Activated T-helper 1 cell treated with anti-CD3 and anti-CD28 coated beads, Interleukin-12 subunit alpha, Interleukin-12 subunit beta, Interleukin-2, Interleukin-4 antibody, amounts not matched to agents 30 ng/mL and 10 ng/mL and 1 ng/mL, durations not matched to agents 14 hours and 24 hours and 36 hours (primary cell): ENCODE measurements at regions of chr1 and their contacts with region 1.

Region 1: GRCh38 chr1:182877842-182878241 is 38.7 kb downstream of the DHX9 start:
- DNase-seq: no peak
- H3K4me3 Mint-ChIP-seq: no peak overlapping the region
- H3K27ac Mint-ChIP-seq: peak overlapping the region; percentile 66
- H3K4me1 Mint-ChIP-seq: peaks cover 34% of the 10 kb centered on the region
- H3K27me3 Mint-ChIP-seq: no peaks in the 10 kb centered on the region

Region 2: GRCh38 chr1:182861994-182862393 is 15.8 kb before region 1 on chr1:
- intact Hi-C with region 1: loop called (anchors 2 kb)
- DNase-seq: no peak
- H3K4me3 Mint-ChIP-seq: no peak overlapping the region
- H3K27ac Mint-ChIP-seq: peak overlapping the region; percentile 24
- H3K4me1 Mint-ChIP-seq: peaks cover 35% of the 10 kb centered on the region
- H3K27me3 Mint-ChIP-seq: no peaks in the 10 kb centered on the region

Region 3: DNA sequence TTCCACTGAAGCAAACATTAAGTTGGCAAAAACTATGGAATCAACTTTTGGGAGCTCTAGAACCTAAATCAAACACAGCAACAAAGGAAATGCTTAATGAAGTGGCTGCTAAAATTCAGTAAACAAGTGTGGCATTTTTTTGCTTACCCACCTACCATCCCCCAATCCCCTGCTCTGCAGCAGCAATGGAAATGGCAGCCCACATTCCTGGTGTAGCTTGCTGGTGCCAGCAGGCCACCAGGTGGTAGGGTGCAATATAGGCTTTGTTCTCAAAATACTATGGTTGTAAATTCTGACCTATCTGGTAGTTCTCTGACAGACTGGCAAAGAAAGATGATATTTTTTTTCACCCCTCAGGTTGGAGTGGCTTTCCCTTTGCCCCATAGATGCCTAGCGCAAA is 32.3 kb after region 1 on chr1:
- intact Hi-C with region 1: no loop called
- DNase-seq: no peak
- H3K4me3 Mint-ChIP-seq: no peak overlapping the region
- H3K27ac Mint-ChIP-seq: no peak overlapping the region
- H3K4me1 Mint-ChIP-seq: no peaks in the 10 kb centered on the region
- H3K27me3 Mint-ChIP-seq: peaks cover 6% of the 10 kb centered on the region

Region 4: DNA sequence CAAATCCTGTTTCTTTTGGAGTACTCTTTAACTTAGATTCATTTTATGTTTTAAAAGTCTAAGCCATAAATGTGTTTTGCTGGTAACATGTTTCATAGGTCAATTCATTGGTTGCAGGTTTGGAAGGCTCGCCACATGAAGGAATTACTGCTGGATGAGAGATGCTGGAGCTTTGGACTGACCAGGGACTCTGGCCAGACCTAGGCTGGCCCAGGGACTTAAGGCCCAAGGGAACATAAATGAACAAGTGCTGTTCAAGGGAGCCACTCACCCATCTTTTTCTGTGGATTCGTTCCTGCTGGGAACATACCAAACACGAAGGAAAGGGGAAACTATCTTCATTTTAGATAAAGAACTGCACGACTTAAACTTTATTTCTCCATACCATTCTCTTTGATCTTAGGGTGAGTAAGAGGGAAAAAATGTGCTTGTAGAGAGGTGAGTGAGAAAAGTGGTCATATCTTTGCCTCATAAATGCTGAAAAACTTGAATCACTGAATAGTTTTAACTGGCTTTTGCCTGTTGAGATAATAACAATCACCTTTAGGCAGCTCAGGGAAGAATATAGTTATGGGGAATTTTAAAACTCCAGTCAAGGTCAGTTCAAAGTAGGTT is 90.4 kb after region 1 on chr1:
- intact Hi-C with region 1: no loop called
- DNase-seq: no peak
- H3K4me3 Mint-ChIP-seq: no peak overlapping the region
- H3K27ac Mint-ChIP-seq: no peak overlapping the region
- H3K4me1 Mint-ChIP-seq: no peaks in the 10 kb centered on the region
- H3K27me3 Mint-ChIP-seq: peaks cover 18% of the 10 kb centered on the region